Ovary (tissue), 10 donors: ENCODE measurements at regions of chr2 and their contacts with region 1.

Region 1: GRCh38 chr2:241355983-241356870 is at the start of gene FARP2:
- DNase-seq: peak; percentile 99 to 100 (median 100)
- H3K4me3 ChIP-seq: peak within 1 kb of the TSS; percentile 63
- H3K27ac ChIP-seq: peak within 1 kb of the TSS; percentile 18 to 87
- H3K4me1 ChIP-seq: peaks cover 15% of the 10 kb centered on the region
- H3K27me3 ChIP-seq: no peaks in the 10 kb centered on the region
- CTCF ChIP-seq: no peak
- EP300 ChIP-seq: no peak
- POLR2A ChIP-seq: peak; percentile 81
- total RNA-seq, gene FARP2: 25.0 to 62.1 (median 40.7) TPM

Region 2: DNA sequence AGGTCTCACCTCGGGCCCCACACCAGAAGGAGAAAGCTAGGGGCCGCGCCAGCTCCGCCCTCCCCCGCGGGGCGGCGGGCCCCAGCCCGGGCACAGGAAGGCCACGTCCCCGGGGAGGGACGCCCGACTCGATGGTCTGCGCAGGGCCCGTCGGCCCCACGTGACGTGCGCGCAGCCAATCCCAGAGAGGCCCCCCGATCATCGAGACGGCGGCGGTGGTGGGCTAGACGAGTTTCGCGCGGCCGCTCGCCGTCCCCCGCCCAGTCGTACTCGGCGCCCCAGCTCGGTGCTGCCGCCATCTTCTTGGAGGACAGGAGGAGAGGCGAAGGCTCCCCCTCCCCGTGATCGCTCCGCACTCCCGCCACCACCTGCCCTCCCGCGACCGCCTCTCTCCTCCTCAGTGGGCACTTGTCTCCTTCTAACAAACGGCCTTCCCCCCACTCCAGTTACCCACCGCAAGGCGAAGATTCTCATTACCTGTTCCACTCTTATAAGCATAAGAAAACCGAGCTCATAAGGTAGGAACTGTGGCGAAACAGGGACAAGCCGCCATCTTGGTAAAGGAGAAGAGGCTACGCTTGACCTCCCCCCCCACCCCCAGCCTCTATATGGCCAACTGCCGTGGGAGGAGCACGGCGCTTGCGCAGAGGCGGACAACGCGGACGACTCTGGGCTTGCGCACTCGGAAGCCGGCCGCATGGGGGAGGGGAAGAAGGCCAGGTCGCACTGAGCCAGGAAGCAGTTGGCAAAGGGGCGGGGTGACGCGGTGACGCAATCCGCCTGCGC is 40.9 kb before region 1 on chr2 and contains the start of gene HDLBP:
- intact Hi-C with region 1: loop called in 1 of 4 experiments (anchors 2 kb)
- DNase-seq: peak; percentile 100
- H3K4me3 ChIP-seq: peak within 1 kb of the TSS; percentile 79
- H3K27ac ChIP-seq: peak within 1 kb of the TSS; percentile 94 to 99
- H3K4me1 ChIP-seq: peaks cover 15% of the 10 kb centered on the region
- H3K27me3 ChIP-seq: no peaks in the 10 kb centered on the region
- CTCF ChIP-seq: peak in 2 of 3 donors; percentile 15 to 27
- EP300 ChIP-seq: no peak
- POLR2A ChIP-seq: no peak
- total RNA-seq, gene HDLBP: 158 to 424 (median 359) TPM

Region 3: GRCh38 chr2:241421330-241421729 is 65.1 kb after region 1 on chr2:
- intact Hi-C with region 1: no loop called
- DNase-seq: no peak
- H3K4me3 ChIP-seq: no peak overlapping the region
- H3K27ac ChIP-seq: no peak overlapping the region
- H3K4me1 ChIP-seq: no peaks in the 10 kb centered on the region
- H3K27me3 ChIP-seq: no peaks in the 10 kb centered on the region
- CTCF ChIP-seq: no peak
- EP300 ChIP-seq: no peak
- POLR2A ChIP-seq: no peak

Region 4: DNA sequence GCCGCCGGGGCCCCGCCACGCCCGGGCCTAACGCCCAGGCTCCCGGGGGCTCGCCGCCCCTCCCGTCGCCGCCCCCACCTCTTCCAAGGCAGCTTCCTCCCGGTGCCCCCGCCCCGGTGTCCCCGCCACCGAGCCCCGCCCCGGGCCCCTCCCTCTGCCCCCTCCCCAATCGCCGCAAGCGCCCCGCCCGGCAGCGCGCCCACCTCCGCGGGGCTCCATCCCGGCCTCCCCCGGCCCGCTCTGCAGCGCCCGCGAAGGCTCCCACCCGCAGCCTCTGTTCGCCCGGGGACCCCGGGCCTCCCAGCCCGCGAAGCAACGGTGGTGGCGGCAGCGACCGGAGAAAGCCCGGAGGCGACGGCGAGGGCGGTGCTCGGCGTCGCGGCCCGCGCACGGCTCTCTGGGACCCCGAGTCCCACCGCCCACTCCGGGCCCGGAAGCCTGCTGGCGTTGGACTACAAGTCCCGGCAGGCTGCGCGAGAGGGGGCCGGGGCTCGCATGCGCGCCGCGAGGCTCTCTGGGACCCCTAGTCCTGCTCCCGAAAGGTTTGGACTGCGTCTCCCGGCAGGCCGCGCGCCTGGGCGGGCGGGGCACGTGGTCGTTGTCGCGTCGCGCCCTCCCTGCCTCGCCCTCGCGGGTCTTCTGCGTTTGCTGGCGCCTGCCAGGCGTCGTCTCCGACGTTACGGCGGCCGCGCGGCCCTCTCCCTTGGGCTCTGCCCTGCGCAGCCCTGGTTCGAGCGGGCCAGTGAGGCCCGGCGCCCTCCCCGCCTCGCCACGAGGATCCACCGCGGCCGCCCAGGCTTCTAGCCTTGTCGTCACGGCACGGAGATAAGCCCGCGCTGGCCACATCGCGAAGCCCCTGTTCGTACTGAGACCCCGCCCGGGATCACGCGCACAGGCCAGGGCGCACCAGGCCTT is 152.3 kb after region 1 on chr2 and contains the start of gene STK25:
- intact Hi-C with region 1: loop called in 1 of 4 experiments (anchors 5 kb)
- DNase-seq: peak; percentile 97 to 98 (median 97)
- H3K4me3 ChIP-seq: peak within 1 kb of the TSS; percentile 99
- H3K27ac ChIP-seq: peak within 1 kb of the TSS; percentile 55 to 87
- H3K4me1 ChIP-seq: peaks cover 9% of the 10 kb centered on the region
- H3K27me3 ChIP-seq: no peaks in the 10 kb centered on the region
- CTCF ChIP-seq: peak in 2 of 3 donors; percentile 11 to 30
- EP300 ChIP-seq: no peak
- POLR2A ChIP-seq: peak; percentile 65
- total RNA-seq, gene STK25: 96.8 to 150 (median 108) TPM

Region 5: DNA sequence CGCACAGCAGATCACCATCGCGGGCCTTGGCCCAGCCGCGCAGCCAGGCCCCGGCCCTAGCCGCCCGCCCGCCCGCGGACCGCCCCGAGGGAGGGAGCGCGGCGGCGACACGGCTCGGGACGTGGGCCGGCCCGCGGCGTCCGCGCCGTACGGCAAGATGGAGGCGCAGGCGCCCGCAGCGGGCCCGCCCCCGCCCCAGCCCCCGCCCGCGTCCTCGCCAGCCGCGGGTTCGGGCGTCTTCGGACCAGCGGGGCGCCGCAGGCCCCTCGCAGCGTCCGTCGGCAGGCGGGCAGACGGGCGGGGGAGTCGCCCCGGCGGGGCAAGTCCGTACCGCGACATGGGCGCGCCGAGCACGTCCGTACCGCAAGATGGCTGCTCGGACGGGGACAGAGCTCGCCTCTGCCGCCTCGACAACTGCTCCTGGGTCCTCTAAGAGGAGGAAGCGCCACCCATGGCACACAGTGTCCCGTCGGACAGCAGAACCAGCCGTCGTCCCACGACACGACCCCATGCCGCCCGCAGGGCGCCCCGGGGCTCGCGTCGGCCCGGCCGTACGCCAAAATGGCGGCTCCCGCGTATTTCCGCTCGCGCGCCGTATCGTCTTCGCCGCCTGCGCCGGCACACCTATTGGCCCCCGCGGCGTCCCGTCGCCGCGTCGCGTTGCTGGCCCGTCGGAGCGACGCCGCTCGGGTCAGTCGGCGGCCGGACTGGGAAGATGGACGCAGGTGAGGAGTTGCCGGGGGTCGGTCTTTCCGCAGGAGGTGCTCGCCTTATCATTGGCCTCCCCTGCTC is 281.0 kb after region 1 on chr2 and contains the starts of genes ATG4B and THAP4:
- intact Hi-C with region 1: no loop called
- DNase-seq: peak; percentile 80 to 91 (median 87)
- H3K4me3 ChIP-seq: peak within 1 kb of the TSS; percentile 83
- H3K27ac ChIP-seq: peak within 1 kb of the TSS; percentile 99
- H3K4me1 ChIP-seq: peaks cover 13% of the 10 kb centered on the region
- H3K27me3 ChIP-seq: no peaks in the 10 kb centered on the region
- CTCF ChIP-seq: peak in 1 of 3 donors; percentile 17
- EP300 ChIP-seq: no peak
- POLR2A ChIP-seq: peak; percentile 20
- total RNA-seq, gene ATG4B: 37.1 to 70.4 (median 56.3) TPM
- total RNA-seq, gene THAP4: 26.2 to 54.7 (median 40.3) TPM